ENCODE measurements at regions of chr6 and their contacts with region 1.

Region 1: DNA sequence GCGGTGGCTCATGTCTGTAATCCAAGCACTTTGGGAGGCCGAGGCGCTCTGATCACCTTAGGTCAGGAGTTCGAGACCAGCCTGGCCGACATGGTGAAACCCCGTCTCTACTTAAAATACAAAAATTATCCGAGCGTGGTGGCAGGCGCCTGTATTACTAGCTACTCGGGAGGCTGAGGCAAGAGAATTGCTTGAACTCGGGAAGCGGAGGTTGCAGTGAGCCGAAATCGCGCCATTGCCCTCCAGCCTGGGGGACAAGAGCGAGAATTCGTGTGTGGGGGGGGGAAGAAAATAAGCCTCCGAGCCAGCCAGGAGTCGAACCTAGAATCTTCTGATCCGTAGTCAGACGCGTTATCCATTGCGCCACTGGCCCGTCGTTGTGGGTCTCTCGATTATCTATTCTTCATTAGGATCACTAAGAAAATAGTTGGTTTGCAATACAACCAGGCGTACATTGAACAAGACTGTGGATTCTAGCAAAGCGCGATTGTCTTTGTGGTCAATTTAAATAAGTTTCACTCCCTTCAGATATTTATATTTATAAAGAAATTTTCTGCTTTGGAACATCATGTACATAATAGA is 33.9 kb upstream of the PRSS16 start:
- DNase-seq: peak; percentile 61
- H3K4me3 ChIP-seq: peak overlapping the region; percentile 73
- H3K27ac ChIP-seq: no peak overlapping the region
- H3K4me1 ChIP-seq: 0 out of 2 replicates have a peak, but pooled peaks cover 4% of the 10 kb centered on the region
- H3K27me3 ChIP-seq: no peaks in the 10 kb centered on the region
- CTCF ChIP-seq: no peak

Region 2: DNA sequence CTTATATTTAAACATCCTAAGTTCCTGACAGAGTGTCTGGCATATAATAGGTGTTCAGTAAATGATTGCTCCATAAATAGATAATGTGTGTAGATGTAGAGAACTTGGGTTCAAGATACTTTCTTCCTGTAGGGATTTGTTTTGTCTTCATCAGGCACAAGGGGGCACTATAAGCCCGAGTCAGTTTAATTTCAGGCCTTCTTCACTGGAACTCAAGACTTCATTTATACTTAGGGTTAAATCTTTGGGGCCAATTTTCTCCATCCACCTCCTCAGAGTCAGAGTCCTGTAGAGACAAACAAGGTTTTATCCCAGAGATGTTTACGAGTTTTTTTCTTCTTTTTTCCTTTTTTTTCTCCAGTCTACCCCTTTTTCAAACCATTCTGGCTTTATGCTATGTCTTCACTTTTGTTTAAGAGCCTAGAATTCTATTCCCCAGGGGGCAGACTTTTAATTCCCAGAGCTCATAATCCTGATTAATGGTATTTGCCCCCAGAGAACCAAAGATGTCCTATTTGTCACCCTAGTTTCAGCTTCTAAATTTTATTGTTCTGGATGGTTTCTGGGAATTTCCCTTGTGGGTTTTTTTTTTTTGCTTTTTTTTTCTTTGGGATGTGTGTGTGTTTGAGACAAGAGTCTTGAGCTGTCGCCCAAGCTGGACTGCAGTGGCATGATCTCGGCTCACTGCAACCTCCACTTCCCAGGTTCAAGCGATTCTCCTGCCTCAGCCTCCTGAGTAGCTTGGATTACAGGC is 1038.0 kb before region 1 on chr6:
- CTCF ChIA-PET with region 1: no interaction called
- POLR2A ChIA-PET with region 1: no interaction called
- intact Hi-C with region 1: no loop called
- DNase-seq: no peak
- H3K4me3 ChIP-seq: no peak overlapping the region
- H3K27ac ChIP-seq: no peak overlapping the region
- H3K4me1 ChIP-seq: peaks cover 23% of the 10 kb centered on the region
- H3K27me3 ChIP-seq: no peaks in the 10 kb centered on the region
- CTCF ChIP-seq: peak; percentile 82

Region 3: GRCh38 chr6:27188885-27189418 is 24.7 kb before region 1 on chr6:
- CTCF ChIA-PET with region 1: no interaction called
- POLR2A ChIA-PET with region 1: no interaction called
- intact Hi-C with region 1: loop called (anchors 1 kb)
- DNase-seq: peak; percentile 55 to 66
- H3K4me3 ChIP-seq: peak overlapping the region; percentile 87
- H3K27ac ChIP-seq: peak overlapping the region; percentile 57; the same call in 1 of the 2 replicates
- H3K4me1 ChIP-seq: peaks cover 12% of the 10 kb centered on the region
- H3K27me3 ChIP-seq: no peaks in the 10 kb centered on the region
- CTCF ChIP-seq: peak; percentile 88

Region 4: GRCh38 chr6:27224729-27225128 is 11.1 kb after region 1 on chr6:
- CTCF ChIA-PET with region 1: no interaction called
- POLR2A ChIA-PET with region 1: no interaction called
- intact Hi-C with region 1: no loop called
- DNase-seq: no peak
- H3K4me3 ChIP-seq: no peak overlapping the region
- H3K27ac ChIP-seq: no peak overlapping the region
- H3K4me1 ChIP-seq: no peaks in the 10 kb centered on the region
- H3K27me3 ChIP-seq: no peaks in the 10 kb centered on the region
- CTCF ChIP-seq: no peak

Region 5: GRCh38 chr6:27295301-27296081 is 81.9 kb after region 1 on chr6:
- CTCF ChIA-PET with region 1: no interaction called
- POLR2A ChIA-PET with region 1: no interaction called
- intact Hi-C with region 1: loop called (anchors 2 kb)
- DNase-seq: peak; percentile 49 to 73
- H3K4me3 ChIP-seq: peak overlapping the region; percentile 84
- H3K27ac ChIP-seq: no peak overlapping the region
- H3K4me1 ChIP-seq: peaks cover 27% of the 10 kb centered on the region
- H3K27me3 ChIP-seq: no peaks in the 10 kb centered on the region
- CTCF ChIP-seq: no peak

Region 6: DNA sequence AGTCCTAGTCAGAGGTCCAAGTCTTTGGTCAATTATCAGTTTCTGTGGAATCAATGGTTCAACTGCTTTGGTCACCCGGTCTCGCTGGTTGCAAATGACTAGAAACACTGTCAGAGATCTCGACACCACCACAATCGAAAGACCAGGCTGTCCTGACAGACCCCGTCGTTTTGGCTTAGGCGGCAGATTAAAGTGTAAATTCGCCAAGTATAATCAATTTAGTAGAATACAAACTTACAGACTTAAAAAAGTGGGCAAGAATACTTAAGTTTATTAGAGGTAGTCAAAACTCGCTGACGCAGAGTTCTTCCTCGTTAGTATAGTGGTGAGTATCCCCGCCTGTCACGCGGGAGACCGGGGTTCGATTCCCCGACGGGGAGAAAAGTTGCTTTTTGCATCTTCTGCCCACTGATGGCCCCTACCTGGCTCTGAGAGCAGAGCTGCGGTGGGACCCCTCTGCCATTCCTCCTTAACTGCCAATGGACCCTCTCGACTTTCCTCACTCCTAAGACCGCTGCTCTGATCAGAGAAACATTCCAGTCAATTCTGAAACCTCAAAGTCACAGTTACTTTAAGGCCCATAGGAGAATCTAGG is 289.9 kb after region 1 on chr6:
- CTCF ChIA-PET with region 1: no interaction called
- POLR2A ChIA-PET with region 1: no interaction called
- intact Hi-C with region 1: loop called (anchors 10 kb)
- DNase-seq: peak; percentile 66 to 75
- H3K4me3 ChIP-seq: peak overlapping the region; percentile 73
- H3K27ac ChIP-seq: peak overlapping the region; percentile 57
- H3K4me1 ChIP-seq: peaks cover 26% of the 10 kb centered on the region
- H3K27me3 ChIP-seq: no peaks in the 10 kb centered on the region
- CTCF ChIP-seq: no peak

Measured in PC-9 (cell line).